ENCODE measurements at regions of chrX and their contacts with region 1.

Region 1: DNA sequence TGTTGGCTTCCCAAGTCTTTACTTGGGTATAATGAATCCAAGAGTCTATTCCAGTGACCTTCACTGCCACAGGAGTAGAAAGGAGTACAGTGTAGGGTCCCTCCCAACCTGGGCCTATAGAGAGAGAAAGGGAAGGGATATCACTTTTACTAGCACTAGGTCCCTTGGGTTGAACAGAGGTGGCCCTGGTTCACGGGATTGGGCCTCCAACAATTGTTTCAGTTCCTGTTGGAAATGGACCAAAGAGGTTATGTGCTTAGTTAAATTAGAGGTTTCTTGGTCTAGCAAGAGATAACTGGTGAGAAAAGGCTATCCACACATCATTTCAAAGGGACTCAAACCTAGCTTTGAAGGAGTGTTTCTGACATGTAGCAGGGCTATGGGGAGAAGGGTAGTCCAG is 57.1 kb upstream of the MED14 start:
- DNase-seq: no peak
- H3K4me3 ChIP-seq: no peak overlapping the region
- H3K4me3 Mint-ChIP-seq: no peak overlapping the region
- H3K27ac ChIP-seq: no peak overlapping the region
- H3K27ac Mint-ChIP-seq: peak overlapping the region in 1 of 8 donors; percentile 48
- H3K4me1 ChIP-seq: no peaks in the 10 kb centered on the region
- H3K4me1 Mint-ChIP-seq: peaks cover 0 to 3% (median 2%) of the 10 kb centered on the region in 3 donors
- H3K27me3 ChIP-seq: no peaks in the 10 kb centered on the region
- H3K27me3 Mint-ChIP-seq: peaks cover 3 to 22% of the 10 kb centered on the region in 2 donors

Region 2: DNA sequence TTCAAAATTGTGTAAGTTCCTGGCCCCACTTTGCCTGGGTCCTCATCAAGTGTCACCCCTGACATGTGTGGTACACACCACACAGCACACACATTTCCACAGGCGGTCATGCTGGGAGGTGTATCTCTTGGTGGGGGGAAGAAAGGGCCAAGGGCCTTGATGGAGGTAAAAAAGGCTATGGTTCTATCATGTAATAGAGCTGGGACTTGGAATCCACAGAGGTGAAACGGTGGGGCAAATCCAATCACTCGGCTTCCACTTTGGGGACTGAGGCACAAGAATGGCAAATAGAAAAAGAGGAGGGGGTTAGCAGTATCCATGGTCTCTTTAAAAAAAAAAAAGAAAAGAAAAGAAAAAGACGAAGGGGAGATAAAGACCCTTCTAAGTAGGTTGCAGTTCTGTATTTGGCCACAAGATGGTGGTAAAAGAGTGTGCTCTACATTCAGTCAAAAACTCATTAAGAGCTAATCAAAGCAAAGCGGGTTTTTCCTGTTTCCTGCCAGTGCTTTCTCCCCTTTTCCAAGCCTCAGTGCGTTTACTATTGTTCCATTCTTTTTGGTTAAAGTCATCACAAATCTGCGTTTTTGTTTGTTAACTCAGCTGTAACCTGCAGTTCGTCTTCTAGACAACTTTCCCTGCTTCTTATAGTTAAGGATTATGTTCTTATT is 248.6 kb before region 1 on chrX:
- CTCF ChIA-PET with region 1: interaction called, 23 read pairs
- POLR2A ChIA-PET with region 1: no interaction called
- DNase-seq: peak in 2 of 5 donors; percentile 16 to 46
- H3K4me3 ChIP-seq: no peak overlapping the region
- H3K4me3 Mint-ChIP-seq: peak overlapping the region in 2 of 7 donors; percentile 3 to 29
- H3K27ac ChIP-seq: peak overlapping the region; percentile 24
- H3K27ac Mint-ChIP-seq: peak overlapping the region in 1 of 8 donors; percentile 31
- H3K4me1 ChIP-seq: peaks cover 3% of the 10 kb centered on the region
- H3K4me1 Mint-ChIP-seq: peaks cover 18 to 25% (median 23%) of the 10 kb centered on the region in 3 donors
- H3K27me3 ChIP-seq: no peaks in the 10 kb centered on the region
- H3K27me3 Mint-ChIP-seq: peaks cover 0 to 4% of the 10 kb centered on the region in 2 donors

Region 3: DNA sequence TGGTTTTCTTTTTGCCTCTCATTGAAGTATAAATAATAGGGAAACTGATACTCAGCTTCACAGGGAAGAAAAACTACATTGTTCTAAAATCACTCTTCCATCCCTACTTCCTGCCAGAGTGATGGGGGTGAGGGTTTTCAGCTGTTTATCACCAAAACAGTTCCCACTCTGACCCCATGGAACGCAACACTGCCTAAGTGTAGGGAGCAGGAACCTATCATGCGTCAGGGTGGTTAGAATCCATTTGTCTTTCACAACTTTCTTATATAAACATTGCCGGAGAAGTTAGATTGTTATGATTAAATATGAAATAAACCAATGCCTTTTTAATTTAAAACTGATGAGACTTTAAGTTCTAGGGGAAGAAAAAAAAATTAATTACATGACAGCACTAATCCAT is 185.1 kb before region 1 on chrX:
- CTCF ChIA-PET with region 1: no interaction called
- POLR2A ChIA-PET with region 1: no interaction called
- DNase-seq: no peak
- H3K4me3 ChIP-seq: no peak overlapping the region
- H3K4me3 Mint-ChIP-seq: no peak overlapping the region
- H3K27ac ChIP-seq: no peak overlapping the region
- H3K27ac Mint-ChIP-seq: no peak overlapping the region
- H3K4me1 ChIP-seq: no peaks in the 10 kb centered on the region
- H3K4me1 Mint-ChIP-seq: no peaks in the 10 kb centered on the region
- H3K27me3 ChIP-seq: no peaks in the 10 kb centered on the region
- H3K27me3 Mint-ChIP-seq: peaks cover 0 to 4% of the 10 kb centered on the region in 2 donors

Region 4: GRCh38 chrX:40651620-40652223 is 140.7 kb before region 1 on chrX:
- CTCF ChIA-PET with region 1: interaction called, 54 read pairs
- POLR2A ChIA-PET with region 1: no interaction called
- DNase-seq: peak; percentile 50 to 74 (median 67)
- H3K4me3 ChIP-seq: no peak overlapping the region
- H3K4me3 Mint-ChIP-seq: no peak overlapping the region
- H3K27ac ChIP-seq: no peak overlapping the region
- H3K27ac Mint-ChIP-seq: peak overlapping the region in 5 of 8 donors; percentile 29 to 68 (median 60)
- H3K4me1 ChIP-seq: peaks cover 6% of the 10 kb centered on the region
- H3K4me1 Mint-ChIP-seq: peaks cover 9 to 17% (median 14%) of the 10 kb centered on the region in 3 donors
- H3K27me3 ChIP-seq: no peaks in the 10 kb centered on the region
- H3K27me3 Mint-ChIP-seq: no peaks in the 10 kb centered on the region

Region 5: GRCh38 chrX:40709395-40709794 is 83.0 kb before region 1 on chrX:
- CTCF ChIA-PET with region 1: no interaction called
- POLR2A ChIA-PET with region 1: no interaction called
- DNase-seq: no peak
- H3K4me3 ChIP-seq: no peak overlapping the region
- H3K4me3 Mint-ChIP-seq: no peak overlapping the region
- H3K27ac ChIP-seq: no peak overlapping the region
- H3K27ac Mint-ChIP-seq: no peak overlapping the region
- H3K4me1 ChIP-seq: no peaks in the 10 kb centered on the region
- H3K4me1 Mint-ChIP-seq: peaks cover 0 to 2% (median 0%) of the 10 kb centered on the region in 3 donors
- H3K27me3 ChIP-seq: no peaks in the 10 kb centered on the region
- H3K27me3 Mint-ChIP-seq: no peaks in the 10 kb centered on the region

Region 6: DNA sequence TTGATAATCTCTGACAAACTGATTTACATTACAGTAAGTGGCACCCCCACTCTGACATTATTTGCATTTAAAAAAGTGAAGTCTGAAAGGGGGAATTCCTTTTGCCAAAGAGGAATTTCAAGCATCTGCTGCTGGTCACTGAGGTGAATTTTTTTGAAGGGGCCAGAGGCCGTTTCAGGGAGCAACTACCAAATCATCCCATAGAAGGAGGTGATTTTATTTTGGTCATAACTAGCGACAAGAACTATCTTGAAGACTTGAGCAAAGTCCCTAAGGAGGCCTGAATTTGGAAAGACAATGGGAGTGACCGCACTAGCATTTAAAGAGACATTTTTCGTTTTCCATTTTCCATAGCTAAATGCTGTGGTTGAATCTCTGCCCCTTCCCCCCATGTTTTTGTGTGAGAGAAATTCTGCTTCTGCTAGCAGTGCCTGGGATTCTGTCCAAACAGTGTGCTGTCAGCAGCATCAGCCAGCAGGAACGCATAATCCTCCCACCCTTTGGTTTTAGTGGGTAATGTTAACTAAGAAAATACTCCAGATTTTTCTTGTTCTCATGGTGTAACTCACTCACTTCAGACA is 53.0 kb after region 1 on chrX:
- CTCF ChIA-PET with region 1: no interaction called
- POLR2A ChIA-PET with region 1: no interaction called
- DNase-seq: no peak
- H3K4me3 ChIP-seq: no peak overlapping the region
- H3K4me3 Mint-ChIP-seq: no peak overlapping the region
- H3K27ac ChIP-seq: no peak overlapping the region
- H3K27ac Mint-ChIP-seq: no peak overlapping the region
- H3K4me1 ChIP-seq: no peaks in the 10 kb centered on the region
- H3K4me1 Mint-ChIP-seq: no peaks in the 10 kb centered on the region
- H3K27me3 ChIP-seq: no peaks in the 10 kb centered on the region
- H3K27me3 Mint-ChIP-seq: peaks cover 10 to 17% of the 10 kb centered on the region in 2 donors

Measured in CD8-positive, alpha-beta memory T cell (primary cell).